ENCODE measurements at regions of chr7 and their contacts with region 1.

Region 1: GRCh38 chr7:111735661-111736551 is 173.6 kb upstream of the IMMP2L start:
- DNase-seq: peak; percentile 79
- H3K4me3 Mint-ChIP-seq: no peak overlapping the region
- H3K27ac Mint-ChIP-seq: no peak overlapping the region
- H3K4me1 Mint-ChIP-seq: no peaks in the 10 kb centered on the region
- H3K27me3 Mint-ChIP-seq: no peaks in the 10 kb centered on the region
- CTCF ChIP-seq: peak; percentile 91

Region 2: DNA sequence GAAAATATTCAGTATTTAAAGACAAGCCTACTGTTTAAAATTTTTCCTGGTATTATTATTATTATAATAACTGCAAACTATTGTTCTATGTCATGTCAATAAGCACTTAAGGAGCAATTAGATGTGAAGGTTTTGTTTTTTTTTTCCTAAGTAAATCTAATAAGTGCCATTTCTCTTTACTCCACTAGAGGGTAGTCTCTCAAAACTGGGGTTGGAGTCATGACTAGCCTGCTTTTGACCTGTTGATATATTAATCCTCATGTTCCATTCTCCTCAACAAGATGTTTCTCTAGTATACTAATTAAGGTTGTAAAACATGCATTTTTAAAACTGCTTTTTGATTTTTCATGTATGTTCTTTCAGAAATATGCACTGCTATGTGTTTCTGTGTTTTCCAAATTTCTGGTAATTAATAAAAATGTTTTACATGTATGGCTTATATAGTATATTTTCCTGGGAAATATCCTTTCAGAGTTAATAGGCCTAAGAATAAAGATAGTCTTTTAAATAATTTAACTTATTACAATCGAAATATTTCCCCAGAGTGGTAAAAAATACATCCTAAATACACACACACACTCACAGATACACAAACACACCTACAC is 646.0 kb before region 1 on chr7:
- CTCF ChIA-PET with region 1: interaction called, 5 read pairs
- POLR2A ChIA-PET with region 1: interaction called, 3 read pairs
- intact Hi-C with region 1: loop called (anchors 1 kb)
- DNase-seq: peak; percentile 48
- H3K4me3 Mint-ChIP-seq: no peak overlapping the region
- H3K27ac Mint-ChIP-seq: no peak overlapping the region
- H3K4me1 Mint-ChIP-seq: no peaks in the 10 kb centered on the region
- H3K27me3 Mint-ChIP-seq: no peaks in the 10 kb centered on the region
- CTCF ChIP-seq: peak; percentile 55

Region 3: DNA sequence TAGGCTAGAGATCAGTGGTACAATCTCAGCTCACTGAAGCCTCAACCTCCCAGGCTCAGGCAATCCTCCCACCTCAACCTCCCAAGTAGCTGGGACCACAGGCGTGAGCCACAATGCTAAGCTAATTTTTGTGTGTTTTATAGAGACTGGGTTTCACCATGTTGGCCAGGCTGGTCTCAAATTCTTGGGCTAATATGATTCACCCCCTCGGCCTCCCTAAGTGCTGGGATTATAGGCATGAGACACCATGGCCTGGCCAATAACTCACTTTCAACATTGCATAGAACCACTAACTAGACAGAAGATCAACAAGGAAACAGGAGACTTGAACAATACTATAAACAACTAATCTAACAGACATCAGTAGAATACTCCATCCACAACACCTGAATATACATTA is 453.3 kb before region 1 on chr7:
- CTCF ChIA-PET with region 1: no interaction called
- POLR2A ChIA-PET with region 1: no interaction called
- intact Hi-C with region 1: no loop called
- DNase-seq: no peak
- H3K4me3 Mint-ChIP-seq: no peak overlapping the region
- H3K27ac Mint-ChIP-seq: no peak overlapping the region
- H3K4me1 Mint-ChIP-seq: no peaks in the 10 kb centered on the region
- H3K27me3 Mint-ChIP-seq: no peaks in the 10 kb centered on the region
- CTCF ChIP-seq: no peak

Region 4: DNA sequence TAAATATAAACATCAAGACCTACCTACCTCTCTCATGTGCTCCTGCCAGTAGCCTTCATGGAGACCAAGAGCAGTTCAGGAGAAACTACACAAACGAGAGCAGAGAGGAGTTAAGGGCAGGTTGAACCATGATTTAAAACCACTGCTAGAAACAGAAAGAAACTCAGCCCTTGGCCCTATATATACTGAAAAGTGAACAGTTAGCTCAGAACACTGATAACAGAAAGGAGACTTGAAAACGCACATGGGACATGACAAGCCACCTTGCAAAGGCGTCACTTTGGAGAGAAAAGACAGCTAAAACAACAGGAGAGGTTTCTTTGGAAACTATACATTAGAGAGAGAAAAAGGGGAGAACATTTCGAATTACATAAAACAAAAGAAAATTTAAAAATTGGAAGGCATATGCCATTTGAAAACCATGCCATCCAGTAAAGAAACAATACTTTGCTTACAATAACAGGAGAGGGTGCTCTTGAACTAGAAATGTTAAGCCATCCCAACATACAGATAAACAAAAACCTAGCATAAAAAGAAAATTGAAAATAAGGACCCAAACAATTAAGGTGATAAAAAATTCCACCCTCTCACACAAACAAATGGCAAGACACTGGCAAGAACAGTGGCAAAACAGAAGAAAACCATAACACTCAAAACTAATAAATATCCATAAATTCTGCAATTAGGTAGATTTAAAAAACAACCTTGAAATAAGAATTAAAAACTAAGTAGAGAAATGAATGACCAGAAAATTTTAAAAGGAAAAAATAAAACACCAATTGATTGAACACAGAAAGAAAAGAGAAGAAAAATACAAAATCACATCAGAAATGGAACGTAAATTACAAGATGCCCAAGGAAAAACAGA is 406.3 kb before region 1 on chr7:
- CTCF ChIA-PET with region 1: interaction called, 8 read pairs
- POLR2A ChIA-PET with region 1: no interaction called
- intact Hi-C with region 1: loop called (anchors 1 kb)
- DNase-seq: peak; percentile 13
- H3K4me3 Mint-ChIP-seq: no peak overlapping the region
- H3K27ac Mint-ChIP-seq: no peak overlapping the region
- H3K4me1 Mint-ChIP-seq: no peaks in the 10 kb centered on the region
- H3K27me3 Mint-ChIP-seq: no peaks in the 10 kb centered on the region
- CTCF ChIP-seq: peak; percentile 30

Region 5: GRCh38 chr7:111486472-111487142 is 249.3 kb before region 1 on chr7:
- CTCF ChIA-PET with region 1: interaction called, 3 read pairs
- POLR2A ChIA-PET with region 1: no interaction called
- intact Hi-C with region 1: loop called (anchors 2 kb)
- DNase-seq: peak; percentile 64
- H3K4me3 Mint-ChIP-seq: no peak overlapping the region
- H3K27ac Mint-ChIP-seq: no peak overlapping the region
- H3K4me1 Mint-ChIP-seq: no peaks in the 10 kb centered on the region
- H3K27me3 Mint-ChIP-seq: no peaks in the 10 kb centered on the region
- CTCF ChIP-seq: peak; percentile 64